MCF 10A (cell line): ENCODE measurements at regions of chr7 and their contacts with region 1.

Region 1: GRCh38 chr7:44999245-45000095 is 531 bp upstream of the CCM2 start:
- DNase-seq: peak; percentile 99
- H3K4me3 Mint-ChIP-seq: peak overlapping the region; percentile 75
- H3K27ac Mint-ChIP-seq: peak overlapping the region; percentile 16
- H3K4me1 Mint-ChIP-seq: peaks cover 29% of the 10 kb centered on the region
- H3K27me3 Mint-ChIP-seq: no peaks in the 10 kb centered on the region
- CTCF ChIP-seq: no peak

Region 2: GRCh38 chr7:44573464-44574286 is 425.8 kb before region 1 on chr7 and contains the start of gene DDX56:
- CTCF ChIA-PET with region 1: no interaction called
- POLR2A ChIA-PET with region 1: interaction called, 15 read pairs
- intact Hi-C with region 1: no loop called
- DNase-seq: peak; percentile 94
- H3K4me3 Mint-ChIP-seq: peak within 1 kb of the TSS; percentile 98
- H3K27ac Mint-ChIP-seq: peak within 1 kb of the TSS; percentile 95
- H3K4me1 Mint-ChIP-seq: peaks cover 21% of the 10 kb centered on the region
- H3K27me3 Mint-ChIP-seq: no peaks in the 10 kb centered on the region
- CTCF ChIP-seq: no peak
- total RNA-seq, gene DDX56: 104 and 105 TPM in 2 replicates

Region 3: DNA sequence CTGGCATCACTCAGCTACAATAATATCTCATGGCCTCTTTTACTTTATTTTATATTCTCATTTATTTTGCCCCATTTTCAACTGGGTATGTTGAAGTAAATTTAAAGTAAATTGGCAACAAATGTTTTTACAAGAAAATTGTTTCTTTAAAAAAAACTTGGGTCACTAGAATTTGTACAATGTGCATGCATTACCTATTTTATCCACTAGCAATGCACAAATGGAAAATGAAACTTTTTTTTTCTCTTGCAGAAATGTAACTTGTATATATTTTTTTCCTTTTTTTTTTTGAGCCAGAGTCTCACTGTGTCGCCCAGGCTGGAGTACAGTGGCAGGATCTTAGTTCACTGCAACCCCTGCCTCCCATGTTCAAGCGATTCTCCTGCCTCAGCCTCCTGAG is 141.3 kb before region 1 on chr7:
- CTCF ChIA-PET with region 1: interaction called, 11 read pairs
- POLR2A ChIA-PET with region 1: interaction called, 8 read pairs
- intact Hi-C with region 1: no loop called
- DNase-seq: no peak
- H3K4me3 Mint-ChIP-seq: no peak overlapping the region
- H3K27ac Mint-ChIP-seq: no peak overlapping the region
- H3K4me1 Mint-ChIP-seq: no peaks in the 10 kb centered on the region
- H3K27me3 Mint-ChIP-seq: no peaks in the 10 kb centered on the region
- CTCF ChIP-seq: no peak

Region 4: GRCh38 chr7:44986218-44987053 is 13.0 kb before region 1 on chr7:
- CTCF ChIA-PET with region 1: interaction called, 5 read pairs
- POLR2A ChIA-PET with region 1: interaction called, 190 read pairs
- intact Hi-C with region 1: no loop called
- DNase-seq: peak; percentile 92
- H3K4me3 Mint-ChIP-seq: peak overlapping the region; percentile 82
- H3K27ac Mint-ChIP-seq: peak overlapping the region; percentile 98
- H3K4me1 Mint-ChIP-seq: peaks cover 38% of the 10 kb centered on the region
- H3K27me3 Mint-ChIP-seq: no peaks in the 10 kb centered on the region
- CTCF ChIP-seq: no peak

Region 5: DNA sequence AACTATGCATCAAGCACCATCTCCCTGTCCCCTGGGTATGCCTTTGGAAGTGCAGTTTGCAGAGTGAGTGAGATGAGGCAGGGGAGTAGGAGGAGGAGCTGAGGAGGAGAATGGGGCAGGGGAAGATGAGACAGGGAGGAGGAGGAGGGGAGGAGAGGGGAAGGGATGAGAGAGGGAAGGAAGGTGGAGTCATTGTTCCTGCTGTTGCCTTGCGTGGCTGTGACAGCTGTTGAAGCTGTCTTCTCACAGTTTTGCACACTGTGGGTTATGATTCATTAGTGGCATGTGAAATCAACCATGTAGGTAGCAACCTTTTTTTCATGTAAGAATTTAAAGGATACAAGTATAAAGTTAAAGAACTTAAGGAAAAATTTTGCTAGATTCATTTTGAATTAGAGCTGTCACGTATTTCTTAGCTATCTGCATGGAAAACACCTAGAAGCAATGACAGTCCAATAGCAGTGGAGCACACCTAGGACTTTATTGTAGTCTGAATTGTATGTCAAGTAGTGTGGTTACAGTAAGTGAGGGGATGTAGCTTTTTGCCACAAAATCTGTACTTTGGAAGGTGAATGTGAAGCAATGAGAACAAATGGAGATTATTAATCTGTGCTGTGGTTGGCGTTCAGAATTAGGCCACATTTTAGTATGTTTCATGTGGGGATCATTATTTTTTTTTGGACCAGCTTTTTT is 22.3 kb after region 1 on chr7:
- CTCF ChIA-PET with region 1: interaction called, 7 read pairs
- POLR2A ChIA-PET with region 1: interaction called, 11 read pairs
- intact Hi-C with region 1: no loop called
- DNase-seq: no peak
- H3K4me3 Mint-ChIP-seq: no peak overlapping the region
- H3K27ac Mint-ChIP-seq: peak overlapping the region; percentile 28
- H3K4me1 Mint-ChIP-seq: peaks cover 8% of the 10 kb centered on the region
- H3K27me3 Mint-ChIP-seq: no peaks in the 10 kb centered on the region
- CTCF ChIP-seq: no peak

Region 6: GRCh38 chr7:45111298-45112223 is 112.1 kb after region 1 on chr7 and contains the start of gene TBRG4:
- CTCF ChIA-PET with region 1: no interaction called
- POLR2A ChIA-PET with region 1: interaction called, 59 read pairs
- intact Hi-C with region 1: loop called (anchors 10 kb)
- DNase-seq: peak; percentile 94
- H3K4me3 Mint-ChIP-seq: peak within 1 kb of the TSS; percentile 91
- H3K27ac Mint-ChIP-seq: peak within 1 kb of the TSS; percentile 97
- H3K4me1 Mint-ChIP-seq: peaks cover 19% of the 10 kb centered on the region
- H3K27me3 Mint-ChIP-seq: no peaks in the 10 kb centered on the region
- CTCF ChIP-seq: no peak
- total RNA-seq, gene TBRG4: 77.2 and 85.7 TPM in 2 replicates

Region 7: DNA sequence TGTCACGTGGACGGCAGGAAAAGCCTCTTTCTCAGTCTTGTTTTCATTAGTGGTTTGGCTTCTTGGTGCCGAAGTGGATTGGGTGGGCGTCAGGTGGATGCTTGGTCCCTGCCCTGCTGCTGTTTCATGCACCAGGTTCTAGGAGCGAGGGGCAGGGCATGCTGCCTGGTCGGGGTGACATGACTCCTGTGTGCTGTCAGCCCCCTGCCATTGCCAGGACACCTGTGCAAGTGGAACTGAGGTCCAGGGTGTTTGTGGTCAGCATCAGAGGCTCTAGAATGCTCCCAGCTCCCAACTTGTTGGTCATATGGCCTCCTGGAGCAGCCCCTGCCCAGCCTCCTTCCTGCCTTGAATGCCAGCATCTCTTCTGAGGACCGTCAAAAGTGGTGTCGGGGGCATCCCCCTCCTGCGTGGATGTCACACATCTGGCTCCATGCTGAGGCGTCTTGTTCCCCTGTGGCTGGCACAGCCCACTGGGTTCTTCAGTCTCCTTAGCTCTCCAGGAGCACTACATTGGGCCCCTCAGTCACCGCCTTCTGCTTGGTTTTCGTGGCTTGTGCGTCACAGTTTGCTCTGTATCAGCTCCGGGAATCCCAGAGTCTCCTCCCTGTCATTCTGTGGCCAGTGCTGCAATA is 599.5 kb after region 1 on chr7:
- CTCF ChIA-PET with region 1: no interaction called
- POLR2A ChIA-PET with region 1: no interaction called
- intact Hi-C with region 1: no loop called
- DNase-seq: no peak
- H3K4me3 Mint-ChIP-seq: no peak overlapping the region
- H3K27ac Mint-ChIP-seq: no peak overlapping the region
- H3K4me1 Mint-ChIP-seq: no peaks in the 10 kb centered on the region
- H3K27me3 Mint-ChIP-seq: peaks cover 41% of the 10 kb centered on the region
- CTCF ChIP-seq: no peak